ENCODE measurements at regions of chr12 and their contacts with region 1.

Region 1: GRCh38 chr12:27305673-27306456 is 26.8 kb upstream of the BMAL2 start:
- DNase-seq: peak; percentile 28
- ATAC-seq: no peak
- H3K4me3 ChIP-seq: no peak overlapping the region
- H3K27ac ChIP-seq: no peak overlapping the region
- H3K4me1 ChIP-seq: peaks cover 10% of the 10 kb centered on the region
- H3K27me3 ChIP-seq: no peaks in the 10 kb centered on the region
- CTCF ChIP-seq: 0 out of 2 replicates have a peak, but pooled peaks have one; percentile 10
- EP300 ChIP-seq: no peak
- POLR2A ChIP-seq: no peak
- RAD21 ChIP-seq: no peak

Region 2: DNA sequence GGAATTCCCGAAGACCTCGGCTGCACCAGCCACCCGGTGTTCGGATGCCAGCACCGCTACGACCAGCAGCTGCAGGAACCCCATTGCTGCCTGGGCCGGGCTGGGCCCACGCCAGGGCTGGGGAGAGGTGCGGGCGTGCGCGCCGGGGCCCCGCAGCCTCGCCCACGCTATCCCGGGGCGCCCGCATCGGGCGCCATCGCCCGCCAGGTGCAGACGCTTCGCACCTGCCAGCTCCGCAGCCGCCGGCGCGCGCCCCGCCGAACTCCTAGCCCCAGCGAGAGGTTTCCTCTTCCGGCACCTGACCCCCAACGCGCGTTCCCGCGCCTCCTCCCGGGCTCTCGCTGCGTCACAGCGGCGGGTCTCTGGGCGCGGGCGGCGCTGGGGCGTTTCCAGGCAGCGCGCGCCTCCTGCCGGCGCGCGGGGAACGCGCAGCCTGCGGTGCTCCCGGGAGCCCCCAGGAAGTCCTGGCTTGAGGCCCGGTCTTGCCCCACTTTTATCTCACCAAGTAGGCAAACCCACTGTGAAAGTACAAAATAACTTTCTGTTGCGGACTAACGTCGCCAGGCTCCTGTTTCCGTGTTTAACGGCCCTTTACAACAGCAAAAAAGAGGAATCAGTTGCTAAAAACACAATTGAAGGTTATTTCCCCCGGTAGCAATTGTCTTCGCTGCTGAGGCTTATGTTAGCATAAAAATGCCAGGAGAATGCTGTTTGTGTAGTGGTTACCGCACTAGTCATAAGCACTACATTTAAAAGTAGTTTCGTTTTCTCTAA is 291.6 kb before region 1 on chr12 and contains the start of gene TM7SF3:
- CTCF ChIA-PET with region 1: no interaction called
- POLR2A ChIA-PET with region 1: no interaction called
- in situ Hi-C with region 1: no loop called
- intact Hi-C with region 1: loop called (anchors 1 kb)
- DNase-seq: peak; percentile 83
- ATAC-seq: peak; percentile 91
- H3K4me3 ChIP-seq: peak within 1 kb of the TSS; percentile 77 to 90 (median 81)
- H3K27ac ChIP-seq: peak within 1 kb of the TSS; percentile 73
- H3K4me1 ChIP-seq: peaks cover 67% of the 10 kb centered on the region
- H3K27me3 ChIP-seq: no peaks in the 10 kb centered on the region; a peak in 1 of 5 replicates
- CTCF ChIP-seq: peak; percentile 85
- EP300 ChIP-seq: 0 out of 4 replicates have a peak, but pooled peaks of 1 of the 2 experiments have one; percentile 37
- POLR2A ChIP-seq: peak; percentile 76 to 79
- RAD21 ChIP-seq: peak; percentile 97
- total RNA-seq, gene TM7SF3: 94.4 and 116 TPM in 2 replicates

Region 3: GRCh38 chr12:27034607-27035293 is 271.1 kb before region 1 on chr12:
- CTCF ChIA-PET with region 1: interaction called, 7 read pairs
- POLR2A ChIA-PET with region 1: no interaction called
- in situ Hi-C with region 1: loop called (anchors 10 kb)
- intact Hi-C with region 1: loop called (anchors 5 kb)
- DNase-seq: no peak
- ATAC-seq: no peak
- H3K4me3 ChIP-seq: no peak overlapping the region
- H3K27ac ChIP-seq: no peak overlapping the region
- H3K4me1 ChIP-seq: peaks cover 11% of the 10 kb centered on the region
- H3K27me3 ChIP-seq: no peaks in the 10 kb centered on the region
- CTCF ChIP-seq: no peak
- EP300 ChIP-seq: no peak
- POLR2A ChIP-seq: no peak
- RAD21 ChIP-seq: no peak

Region 4: DNA sequence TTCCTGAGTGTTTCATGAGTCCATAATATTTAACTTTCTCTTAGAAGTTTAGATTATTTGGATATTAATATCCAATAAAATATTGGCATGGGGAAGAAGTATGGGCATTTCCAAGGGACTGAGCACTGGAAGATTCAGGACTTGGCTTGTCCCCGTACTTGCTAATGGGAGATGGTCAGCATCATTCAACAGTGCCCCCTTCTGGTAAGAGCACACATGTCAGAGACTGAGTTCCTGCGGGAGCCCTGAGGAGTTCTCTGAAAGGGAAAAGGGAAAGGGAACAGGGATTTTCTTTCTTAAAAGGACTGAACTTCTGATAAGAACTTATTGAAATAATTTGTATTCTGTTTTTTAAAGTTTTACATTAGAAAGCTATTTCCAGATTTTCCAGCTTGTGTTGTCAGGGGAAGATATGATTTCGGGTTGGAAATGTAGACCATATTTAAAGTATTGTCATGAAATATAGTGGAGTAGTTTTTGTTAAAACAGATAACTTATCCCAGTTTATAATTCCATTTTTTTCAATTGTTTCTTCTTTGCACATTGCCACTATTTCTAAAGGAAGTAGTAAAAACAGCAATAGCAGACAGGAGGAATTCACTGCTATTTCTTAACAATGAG is 163.7 kb before region 1 on chr12:
- CTCF ChIA-PET with region 1: interaction called, 4 read pairs
- POLR2A ChIA-PET with region 1: no interaction called
- in situ Hi-C with region 1: no loop called
- intact Hi-C with region 1: loop called (anchors 1 kb)
- DNase-seq: peak; percentile 53
- ATAC-seq: peak; percentile 95
- H3K4me3 ChIP-seq: no peak overlapping the region
- H3K27ac ChIP-seq: no peak overlapping the region
- H3K4me1 ChIP-seq: no peaks in the 10 kb centered on the region
- H3K27me3 ChIP-seq: no peaks in the 10 kb centered on the region
- CTCF ChIP-seq: peak; percentile 82
- EP300 ChIP-seq: no peak
- POLR2A ChIP-seq: no peak
- RAD21 ChIP-seq: peak; percentile 10; the same call in 1 of the 2 replicates

Region 5: DNA sequence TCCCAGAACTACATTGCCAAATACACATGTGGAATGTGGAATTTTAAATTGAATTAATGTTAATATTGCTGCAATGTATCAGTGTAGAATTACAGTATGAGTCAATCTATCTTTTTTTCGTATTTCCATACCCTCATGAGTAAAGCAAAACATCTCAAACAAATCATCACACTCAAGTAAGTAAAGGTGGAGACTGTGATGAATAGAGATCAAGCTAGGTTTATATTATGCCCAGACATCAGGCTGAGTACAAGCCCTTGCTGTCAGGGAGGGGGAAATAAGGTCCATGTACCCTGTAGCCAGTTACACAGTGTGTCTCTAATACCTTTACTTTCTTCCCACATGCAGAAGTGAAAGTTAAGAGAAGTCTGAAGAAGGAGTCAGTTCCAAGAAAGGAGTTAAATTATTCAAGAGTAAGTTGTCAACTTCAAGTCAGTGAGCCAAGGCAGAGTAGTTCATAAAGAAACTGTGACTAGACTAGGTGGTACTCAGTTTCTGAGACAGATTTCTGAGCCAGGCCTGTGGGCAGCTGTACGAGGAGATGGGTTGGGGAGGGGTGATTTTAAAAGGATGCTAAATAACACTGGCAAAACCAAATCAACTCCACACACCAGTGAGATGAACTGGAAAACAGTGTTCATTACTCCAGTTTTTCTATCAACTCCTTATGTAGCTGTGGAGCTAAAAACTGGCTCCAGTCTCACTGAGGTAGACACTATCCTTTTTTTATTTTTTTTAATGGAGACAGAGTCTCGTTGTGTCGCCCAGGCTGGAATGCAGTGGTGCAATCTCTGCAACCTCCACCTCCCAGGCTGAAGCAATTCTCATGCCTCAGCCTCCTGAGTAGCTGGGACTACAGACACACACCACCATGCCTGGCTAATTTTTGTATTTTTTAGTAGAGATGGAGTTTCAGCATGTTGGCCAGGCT is 85.5 kb before region 1 on chr12:
- CTCF ChIA-PET with region 1: no interaction called
- POLR2A ChIA-PET with region 1: no interaction called
- in situ Hi-C with region 1: no loop called
- intact Hi-C with region 1: no loop called
- DNase-seq: no peak
- ATAC-seq: no peak
- H3K4me3 ChIP-seq: no peak overlapping the region
- H3K27ac ChIP-seq: no peak overlapping the region
- H3K4me1 ChIP-seq: no peaks in the 10 kb centered on the region
- H3K27me3 ChIP-seq: no peaks in the 10 kb centered on the region
- CTCF ChIP-seq: no peak
- EP300 ChIP-seq: no peak
- POLR2A ChIP-seq: no peak
- RAD21 ChIP-seq: no peak

Region 6: DNA sequence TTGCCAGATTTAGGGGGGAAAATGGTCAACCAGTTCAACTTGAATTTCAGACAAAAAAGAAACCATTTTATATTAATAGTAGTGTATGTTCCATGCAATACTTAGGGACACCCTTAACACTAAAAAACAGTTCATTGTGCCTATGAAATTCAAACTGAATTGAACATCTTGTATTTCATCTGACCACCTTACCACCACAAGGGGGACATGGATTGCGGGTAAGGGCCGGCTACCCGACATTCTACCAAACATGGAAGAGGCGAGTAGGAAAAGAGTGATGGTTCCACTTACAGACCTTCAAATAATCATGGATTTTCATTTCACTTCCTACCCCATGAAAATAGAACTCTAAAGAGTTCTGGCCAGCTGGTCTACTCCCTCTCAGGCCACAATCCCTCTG is 72.1 kb before region 1 on chr12:
- CTCF ChIA-PET with region 1: interaction called, 5 read pairs
- POLR2A ChIA-PET with region 1: no interaction called
- in situ Hi-C with region 1: no loop called
- intact Hi-C with region 1: loop called (anchors 5 kb)
- DNase-seq: peak; percentile 26
- ATAC-seq: peak; percentile 56
- H3K4me3 ChIP-seq: no peak overlapping the region
- H3K27ac ChIP-seq: no peak overlapping the region
- H3K4me1 ChIP-seq: peaks cover 17% of the 10 kb centered on the region
- H3K27me3 ChIP-seq: no peaks in the 10 kb centered on the region
- CTCF ChIP-seq: no peak
- EP300 ChIP-seq: no peak
- POLR2A ChIP-seq: no peak
- RAD21 ChIP-seq: no peak

Region 7: DNA sequence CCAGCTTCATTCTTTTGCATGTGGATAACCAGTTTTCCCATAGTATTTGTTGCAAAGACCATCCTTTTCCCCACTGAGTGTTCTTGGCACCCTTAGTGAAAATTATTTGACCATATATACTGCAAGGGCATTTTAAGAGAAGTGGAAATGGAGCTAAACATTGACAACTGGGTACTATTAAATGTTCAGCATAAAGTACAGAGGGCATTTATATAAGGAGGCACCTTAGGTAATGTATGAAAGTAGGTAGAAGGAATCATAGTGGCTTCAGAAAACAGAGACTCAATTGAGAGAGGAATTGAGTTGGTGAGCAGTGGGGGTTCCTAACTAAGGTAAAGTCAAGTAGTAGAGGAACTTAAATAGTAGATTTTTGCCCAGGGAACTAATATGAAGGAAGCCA is 106.2 kb after region 1 on chr12:
- CTCF ChIA-PET with region 1: no interaction called
- POLR2A ChIA-PET with region 1: no interaction called
- in situ Hi-C with region 1: no loop called
- intact Hi-C with region 1: no loop called
- DNase-seq: no peak
- ATAC-seq: no peak
- H3K4me3 ChIP-seq: no peak overlapping the region
- H3K27ac ChIP-seq: no peak overlapping the region
- H3K4me1 ChIP-seq: no peaks in the 10 kb centered on the region
- H3K27me3 ChIP-seq: no peaks in the 10 kb centered on the region
- CTCF ChIP-seq: no peak
- EP300 ChIP-seq: no peak
- POLR2A ChIP-seq: no peak
- RAD21 ChIP-seq: no peak

Measured in HepG2 (cell line).